HepG2 (cell line): ENCODE measurements at regions of chr17 and their contacts with region 1.

Region 1: DNA sequence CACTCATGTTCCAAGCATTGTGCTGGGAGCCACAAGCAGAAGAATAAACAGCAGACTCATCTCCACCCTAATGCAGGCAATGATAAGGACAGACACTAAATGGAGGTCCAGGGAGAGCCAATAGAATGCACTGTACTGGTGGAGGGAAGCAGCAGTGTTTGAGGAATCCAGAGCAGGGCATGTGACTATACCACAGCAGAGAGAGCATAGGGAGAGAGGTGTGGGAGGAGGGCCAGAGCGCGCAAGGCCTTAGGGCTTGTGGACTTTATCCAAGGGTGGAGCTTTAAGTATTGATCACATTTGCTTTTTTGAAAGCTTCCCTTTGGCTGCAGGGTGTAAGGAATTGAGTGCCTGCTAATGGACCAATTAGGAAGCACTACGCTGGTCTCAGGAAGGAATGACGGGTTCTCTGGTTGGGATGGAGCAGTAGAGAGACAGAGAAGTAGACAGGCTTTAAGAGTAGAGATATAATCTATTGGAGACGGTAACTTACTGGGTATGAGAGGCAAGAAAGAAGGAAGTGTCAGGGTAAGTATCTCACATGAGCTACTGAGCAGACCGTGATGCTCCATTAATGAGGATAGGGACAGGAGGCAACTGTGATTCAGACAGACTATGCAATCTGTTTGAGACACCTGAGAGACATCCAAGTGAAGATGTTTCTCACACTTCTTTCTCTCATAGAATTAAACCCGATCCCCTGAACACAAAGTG is 82.2 kb downstream of the MYO1D start:
- DNase-seq: peak; percentile 87
- ATAC-seq: peak; percentile 100
- H3K4me3 ChIP-seq: peak overlapping the region; percentile 23 to 38 (median 28); a peak in 5 of 6 replicates
- H3K27ac ChIP-seq: peak overlapping the region; percentile 62
- H3K4me1 ChIP-seq: peaks cover 49% of the 10 kb centered on the region
- H3K27me3 ChIP-seq: no peaks in the 10 kb centered on the region
- CTCF ChIP-seq: no peak
- EP300 ChIP-seq: peak in 1 of 2 experiments; percentile 44; a peak in 1 of 4 replicates
- POLR2A ChIP-seq: peak in 1 of 2 experiments; percentile 31; a peak in 1 of 4 replicates
- RAD21 ChIP-seq: no peak

Region 2: DNA sequence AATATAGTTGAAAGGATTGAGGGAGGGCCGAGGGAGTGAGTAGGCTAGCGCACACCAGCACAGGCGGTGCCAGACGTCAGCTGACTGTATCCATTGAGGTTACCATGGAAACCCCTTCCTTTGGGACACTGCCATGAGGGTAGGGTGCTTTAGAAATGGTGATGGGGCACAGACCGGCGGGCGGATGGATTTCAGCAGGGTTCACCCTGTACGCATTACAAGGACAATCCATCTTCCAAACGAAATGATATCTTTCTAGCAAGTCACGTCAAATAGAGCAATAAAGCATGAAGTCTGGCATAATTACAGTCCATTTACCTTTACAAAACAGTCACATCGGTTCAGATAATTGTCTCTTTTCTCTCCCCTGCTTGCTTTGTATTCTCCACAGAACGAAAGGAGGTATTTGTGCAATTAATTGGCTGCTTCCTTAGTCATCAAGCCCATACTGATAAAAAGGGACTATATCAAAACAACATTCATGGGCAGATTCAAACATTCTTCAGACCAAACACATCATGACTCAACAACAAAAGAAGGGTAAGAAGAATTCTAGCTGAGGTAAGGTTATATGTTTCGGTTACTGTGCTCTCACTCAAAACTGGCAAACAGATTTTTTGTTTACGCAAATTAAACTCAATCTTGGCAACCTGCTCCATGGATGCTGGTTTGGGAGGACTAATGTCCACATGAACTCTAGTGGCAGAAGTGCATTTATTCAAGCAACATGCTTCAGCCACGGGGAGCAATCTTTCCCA is 167.3 kb before region 1 on chr17:
- CTCF ChIA-PET with region 1: no interaction called
- POLR2A ChIA-PET with region 1: no interaction called
- in situ Hi-C with region 1: no loop called
- intact Hi-C with region 1: no loop called
- DNase-seq: no peak
- ATAC-seq: no peak
- H3K4me3 ChIP-seq: no peak overlapping the region
- H3K27ac ChIP-seq: no peak overlapping the region
- H3K4me1 ChIP-seq: no peaks in the 10 kb centered on the region
- H3K27me3 ChIP-seq: no peaks in the 10 kb centered on the region
- CTCF ChIP-seq: no peak
- EP300 ChIP-seq: no peak
- POLR2A ChIP-seq: no peak
- RAD21 ChIP-seq: no peak

Region 3: DNA sequence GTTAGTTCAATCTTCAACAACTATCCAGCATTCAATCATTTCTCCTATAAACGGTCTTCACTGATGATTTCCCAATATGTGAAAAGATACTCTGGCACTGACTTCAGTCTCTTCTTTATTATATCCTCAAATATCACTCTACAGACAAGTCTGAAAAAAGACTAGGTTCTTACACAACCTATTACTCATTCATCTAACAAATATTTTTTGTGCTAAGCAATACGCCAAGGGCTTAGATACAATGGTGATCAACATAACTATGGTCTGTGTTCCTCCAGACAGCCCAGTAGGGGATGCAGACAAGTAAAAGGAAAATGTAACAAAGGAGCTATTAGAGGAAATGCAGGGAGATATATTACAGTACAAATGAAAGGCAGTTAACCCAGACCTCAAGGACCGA is 18.3 kb after region 1 on chr17:
- CTCF ChIA-PET with region 1: no interaction called
- POLR2A ChIA-PET with region 1: no interaction called
- in situ Hi-C with region 1: no loop called
- intact Hi-C with region 1: no loop called
- DNase-seq: no peak
- ATAC-seq: no peak
- H3K4me3 ChIP-seq: no peak overlapping the region
- H3K27ac ChIP-seq: no peak overlapping the region
- H3K4me1 ChIP-seq: peaks cover 30% of the 10 kb centered on the region
- H3K27me3 ChIP-seq: no peaks in the 10 kb centered on the region
- CTCF ChIP-seq: no peak
- EP300 ChIP-seq: no peak
- POLR2A ChIP-seq: no peak
- RAD21 ChIP-seq: no peak

Region 4: DNA sequence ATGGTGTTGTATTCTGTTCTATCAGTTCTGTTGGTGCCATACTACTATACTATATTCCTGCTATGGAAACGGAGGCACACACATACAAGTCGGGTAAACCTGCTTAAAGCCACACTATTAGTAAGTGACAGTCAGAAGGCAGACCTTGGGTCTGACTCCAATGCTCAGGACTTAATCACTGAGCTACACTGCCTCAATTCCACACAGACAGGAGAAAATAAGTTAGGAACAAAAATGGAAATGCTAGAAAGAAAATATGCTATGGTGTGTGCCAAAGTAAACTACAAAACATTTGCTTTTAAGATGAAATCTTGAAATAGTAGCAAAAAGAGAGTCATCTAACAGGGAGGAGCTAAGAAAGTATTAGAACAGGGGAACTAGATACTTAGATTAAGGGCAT is 34.1 kb after region 1 on chr17:
- CTCF ChIA-PET with region 1: no interaction called
- POLR2A ChIA-PET with region 1: interaction called, 10 read pairs
- in situ Hi-C with region 1: no loop called
- intact Hi-C with region 1: no loop called
- DNase-seq: no peak
- ATAC-seq: peak; percentile 48; the same call in 2 of the 3 replicates
- H3K4me3 ChIP-seq: peak overlapping the region; percentile 37 to 63 (median 62)
- H3K27ac ChIP-seq: peak overlapping the region; percentile 53
- H3K4me1 ChIP-seq: peaks cover 32% of the 10 kb centered on the region
- H3K27me3 ChIP-seq: no peaks in the 10 kb centered on the region
- CTCF ChIP-seq: no peak
- EP300 ChIP-seq: no peak
- POLR2A ChIP-seq: no peak
- RAD21 ChIP-seq: no peak

Region 5: GRCh38 chr17:32903774-32904673 is 109.3 kb after region 1 on chr17:
- CTCF ChIA-PET with region 1: no interaction called
- POLR2A ChIA-PET with region 1: no interaction called
- in situ Hi-C with region 1: no loop called
- intact Hi-C with region 1: no loop called
- DNase-seq: no peak
- ATAC-seq: no peak
- H3K4me3 ChIP-seq: no peak overlapping the region
- H3K27ac ChIP-seq: no peak overlapping the region
- H3K4me1 ChIP-seq: peaks cover 21% of the 10 kb centered on the region
- H3K27me3 ChIP-seq: no peaks in the 10 kb centered on the region; a peak in 1 of 5 replicates
- CTCF ChIP-seq: no peak
- EP300 ChIP-seq: 0 out of 4 replicates have a peak, but pooled peaks of 1 of the 2 experiments have one; percentile 20
- POLR2A ChIP-seq: no peak
- RAD21 ChIP-seq: no peak